CD4-positive, alpha-beta T cell (primary cell): ENCODE measurements at regions of chr12 and their contacts with region 1.

Region 1: DNA sequence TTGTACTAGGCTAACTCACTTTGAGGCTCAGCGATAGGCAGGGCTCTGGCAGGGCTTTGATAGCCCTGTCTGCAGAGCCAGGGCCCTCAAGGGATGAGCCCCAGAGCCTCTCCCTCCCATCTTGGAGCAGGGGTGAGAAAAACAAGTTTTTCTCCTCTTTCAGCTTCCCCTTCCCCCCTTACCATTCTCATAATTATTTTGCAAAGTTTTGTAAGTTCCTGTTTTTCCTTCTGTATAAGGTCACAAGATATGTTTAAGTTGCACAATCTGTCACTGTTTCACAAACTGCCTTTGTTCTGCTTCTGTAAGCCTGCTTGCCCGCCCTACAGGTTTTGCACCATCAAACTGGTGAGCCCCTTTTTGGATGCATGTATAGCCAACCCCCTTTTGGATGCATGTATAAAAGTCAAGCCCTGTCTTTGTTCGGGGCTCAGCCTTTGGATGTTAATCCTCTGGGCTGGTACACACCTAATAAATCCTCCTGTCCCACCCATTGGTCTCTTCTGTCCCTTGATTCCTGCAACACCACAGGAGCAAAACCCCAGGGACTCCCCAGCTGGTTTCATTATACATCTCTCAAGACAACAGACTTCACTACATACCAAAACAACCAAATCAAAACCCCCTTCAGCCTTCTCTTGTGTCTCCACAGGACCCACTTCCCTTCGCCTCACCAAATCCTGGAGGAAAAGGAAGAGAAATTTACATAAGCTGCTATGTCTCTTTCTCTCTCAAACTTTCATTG is 52.5 kb upstream of the RESF1 start:
- DNase-seq: peak in 2 of 14 experiments; percentile 29 to 35
- ATAC-seq: no peak
- H3K4me3 ChIP-seq: no peak overlapping the region
- H3K4me3 Mint-ChIP-seq: no peak overlapping the region
- H3K27ac ChIP-seq: no peak overlapping the region
- H3K27ac Mint-ChIP-seq: no peak overlapping the region
- H3K4me1 ChIP-seq: no peaks in the 10 kb centered on the region
- H3K4me1 Mint-ChIP-seq: peaks cover 19% of the 10 kb centered on the region
- H3K27me3 ChIP-seq: no peaks in the 10 kb centered on the region
- H3K27me3 Mint-ChIP-seq: no peaks in the 10 kb centered on the region
- CTCF ChIP-seq: no peak

Region 2: GRCh38 chr12:31832740-31833729 is 73.7 kb before region 1 on chr12:
- CTCF ChIA-PET with region 1: interaction called, 3 read pairs
- POLR2A ChIA-PET with region 1: no interaction called
- intact Hi-C with region 1: loop called in 1 of 2 experiments (anchors 10 kb)
- DNase-seq: peak in 13 of 14 experiments; percentile 1 to 79 (median 10)
- ATAC-seq: peak; percentile 77
- H3K4me3 ChIP-seq: no peak overlapping the region
- H3K4me3 Mint-ChIP-seq: peak overlapping the region; percentile 45
- H3K27ac ChIP-seq: peak overlapping the region in 1 of 2 donors; percentile 19
- H3K27ac Mint-ChIP-seq: peak overlapping the region; percentile 84
- H3K4me1 ChIP-seq: peaks cover 28% of the 10 kb centered on the region
- H3K4me1 Mint-ChIP-seq: peaks cover 53% of the 10 kb centered on the region
- H3K27me3 ChIP-seq: no peaks in the 10 kb centered on the region
- H3K27me3 Mint-ChIP-seq: no peaks in the 10 kb centered on the region
- CTCF ChIP-seq: no peak

Region 3: DNA sequence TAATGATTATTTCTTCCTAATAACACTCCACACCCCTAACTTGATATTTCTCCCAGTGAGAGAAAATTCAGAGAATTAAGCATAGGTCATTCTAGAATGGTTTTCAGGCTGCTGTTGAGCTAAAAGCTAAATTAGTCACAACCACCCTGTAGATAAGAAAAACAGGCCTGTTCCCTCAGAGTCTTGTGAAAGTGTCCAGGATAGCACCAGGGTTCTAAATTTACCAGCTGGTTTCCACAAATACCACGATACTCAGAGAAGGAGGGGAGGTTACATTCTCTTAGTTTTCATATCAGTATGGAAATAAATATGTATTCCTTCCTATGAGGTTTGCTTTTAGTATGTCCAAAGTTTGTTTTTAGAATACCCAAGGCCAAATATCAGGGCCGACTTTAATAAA is 915.0 kb after region 1 on chr12:
- CTCF ChIA-PET with region 1: no interaction called
- POLR2A ChIA-PET with region 1: no interaction called
- intact Hi-C with region 1: no loop called
- DNase-seq: no peak
- ATAC-seq: no peak
- H3K4me3 ChIP-seq: no peak overlapping the region
- H3K4me3 Mint-ChIP-seq: no peak overlapping the region
- H3K27ac ChIP-seq: no peak overlapping the region
- H3K27ac Mint-ChIP-seq: no peak overlapping the region
- H3K4me1 ChIP-seq: no peaks in the 10 kb centered on the region
- H3K4me1 Mint-ChIP-seq: no peaks in the 10 kb centered on the region
- H3K27me3 ChIP-seq: peaks cover 0 to 7% of the 10 kb centered on the region in 2 experiments
- H3K27me3 Mint-ChIP-seq: peaks cover 14% of the 10 kb centered on the region
- CTCF ChIP-seq: no peak